SK-N-SH (cell line): ENCODE measurements at regions of chrX and their contacts with region 1.

Region 1: DNA sequence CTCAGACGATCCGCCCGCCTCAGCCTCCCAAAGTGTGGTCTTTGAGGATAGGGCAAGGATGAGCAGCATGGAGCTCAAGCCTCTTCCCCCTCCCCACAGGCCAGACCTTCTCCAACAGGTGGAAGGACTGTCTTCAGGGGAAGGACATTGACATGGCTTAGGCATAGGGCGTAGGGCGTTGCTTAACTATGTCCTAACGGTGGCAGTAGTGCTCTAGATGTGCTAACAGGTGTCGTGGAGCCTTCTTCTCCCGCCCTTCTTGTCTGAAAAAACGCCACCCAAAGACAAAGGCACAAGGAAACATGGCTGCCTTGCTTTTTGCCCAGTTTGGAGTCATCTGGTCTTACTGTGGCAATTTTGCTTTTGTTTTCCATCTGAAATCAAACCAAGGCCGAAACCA is 219.8 kb downstream of the OR13H1 start:
- DNase-seq: peak; percentile 29
- H3K4me3 ChIP-seq: peak overlapping the region; percentile 39 to 43; a peak in 3 of 4 replicates
- H3K27ac ChIP-seq: no peak overlapping the region
- H3K4me1 ChIP-seq: no peaks in the 10 kb centered on the region; a peak in 1 of 4 replicates
- H3K27me3 ChIP-seq: peaks cover 3% of the 10 kb centered on the region; the same call in 1 of the 2 replicates
- CTCF ChIP-seq: peak; percentile 71
- EP300 ChIP-seq: no peak
- RAD21 ChIP-seq: peak; percentile 85

Region 2: DNA sequence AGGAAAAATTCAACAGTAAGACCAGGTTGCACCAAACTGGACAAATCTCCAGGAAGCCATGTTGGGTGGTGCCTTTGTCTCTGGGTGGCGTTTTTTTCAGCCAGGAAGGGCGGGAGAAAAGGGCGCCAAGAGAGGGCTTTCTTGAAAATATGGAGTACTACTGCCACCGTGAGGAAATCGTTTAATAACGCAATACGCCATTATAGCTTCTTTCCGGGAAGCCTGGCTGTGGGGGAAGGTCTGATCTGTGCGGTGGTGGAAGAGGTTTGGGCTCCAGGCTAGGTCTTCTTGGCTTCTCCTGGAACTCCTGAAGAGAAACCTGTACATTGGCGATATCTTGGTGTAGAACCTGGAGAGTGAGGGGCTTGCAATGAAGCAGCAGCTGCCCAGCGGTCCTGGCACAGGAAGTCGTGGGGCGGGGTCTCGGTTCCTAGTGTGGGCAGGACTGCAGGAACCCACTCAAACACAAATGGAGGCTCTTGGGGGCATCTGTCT is 17.2 kb before region 1 on chrX:
- CTCF ChIA-PET with region 1: interaction called, 19 read pairs
- POLR2A ChIA-PET with region 1: interaction called, 3 read pairs
- DNase-seq: peak; percentile 62
- H3K4me3 ChIP-seq: peak overlapping the region; percentile 52 to 67
- H3K27ac ChIP-seq: peak overlapping the region; percentile 50 to 90; a peak in 3 of 4 replicates
- H3K4me1 ChIP-seq: peaks cover 0 to 2% of the 10 kb centered on the region in 2 experiments; a peak in 1 of 4 replicates
- H3K27me3 ChIP-seq: no peaks in the 10 kb centered on the region
- CTCF ChIP-seq: peak; percentile 65
- EP300 ChIP-seq: no peak
- RAD21 ChIP-seq: peak; percentile 81

Region 3: GRCh38 chrX:131783555-131784308 is 20.1 kb after region 1 on chrX:
- CTCF ChIA-PET with region 1: interaction called, 11 read pairs
- POLR2A ChIA-PET with region 1: no interaction called
- DNase-seq: no peak
- H3K4me3 ChIP-seq: peak overlapping the region in 1 of 2 experiments; percentile 24; a peak in 2 of 4 replicates
- H3K27ac ChIP-seq: no peak overlapping the region
- H3K4me1 ChIP-seq: peaks cover 0 to 6% of the 10 kb centered on the region in 2 experiments; a peak in 1 of 4 replicates
- H3K27me3 ChIP-seq: no peaks in the 10 kb centered on the region
- CTCF ChIP-seq: peak; percentile 64
- EP300 ChIP-seq: no peak
- RAD21 ChIP-seq: peak; percentile 87

Region 4: DNA sequence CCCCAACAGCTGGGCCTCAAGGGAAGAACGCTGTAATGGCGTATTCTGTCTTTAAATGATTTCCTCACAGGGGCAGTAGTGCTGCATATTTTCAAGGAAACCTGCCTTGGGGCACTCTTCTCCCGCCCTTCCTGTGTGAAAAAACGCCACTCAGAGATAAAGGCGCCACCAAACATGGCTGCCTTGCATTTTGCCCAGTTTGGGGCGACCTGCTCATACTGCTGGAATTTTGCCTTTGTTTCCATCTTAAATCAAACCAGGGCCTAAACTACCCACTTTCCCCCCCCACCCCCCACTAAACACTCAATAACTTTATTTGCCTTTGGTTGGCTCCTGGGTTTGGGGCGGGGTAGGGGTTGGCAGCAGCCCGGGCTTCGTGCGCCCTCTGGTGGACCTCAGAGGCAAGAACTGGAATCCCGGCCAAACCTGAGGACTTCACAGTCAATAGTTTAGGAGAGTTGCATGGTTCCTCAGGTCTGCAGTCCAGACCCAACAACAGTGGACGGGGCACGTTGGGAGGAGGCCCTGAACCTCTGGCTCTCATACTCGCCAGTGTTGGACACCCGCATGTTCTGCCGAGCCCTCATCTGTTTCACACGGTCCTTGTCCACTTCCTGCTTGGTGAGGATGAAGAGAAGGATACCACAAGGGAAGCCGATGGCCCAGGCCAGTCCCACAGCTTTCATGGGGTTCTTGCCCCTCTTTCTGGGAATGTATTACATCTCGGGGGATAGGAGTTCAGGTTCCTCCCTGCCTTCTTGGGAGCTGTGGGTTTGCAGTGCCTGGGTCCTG is 39.4 kb after region 1 on chrX:
- CTCF ChIA-PET with region 1: interaction called, 12 read pairs
- POLR2A ChIA-PET with region 1: no interaction called
- DNase-seq: peak; percentile 71
- H3K4me3 ChIP-seq: peak overlapping the region; percentile 33 to 56; a peak in 3 of 4 replicates
- H3K27ac ChIP-seq: no peak overlapping the region
- H3K4me1 ChIP-seq: no peaks in the 10 kb centered on the region; a peak in 1 of 4 replicates
- H3K27me3 ChIP-seq: peaks cover 16% of the 10 kb centered on the region; the same call in 1 of the 2 replicates
- CTCF ChIP-seq: peak; percentile 82
- EP300 ChIP-seq: no peak
- RAD21 ChIP-seq: peak; percentile 40

Region 5: GRCh38 chrX:131845201-131845600 is 81.5 kb after region 1 on chrX:
- CTCF ChIA-PET with region 1: no interaction called
- POLR2A ChIA-PET with region 1: no interaction called
- DNase-seq: no peak
- H3K4me3 ChIP-seq: no peak overlapping the region
- H3K27ac ChIP-seq: no peak overlapping the region
- H3K4me1 ChIP-seq: peaks cover 0 to 3% of the 10 kb centered on the region in 2 experiments; a peak in 1 of 4 replicates
- H3K27me3 ChIP-seq: peaks cover 11% of the 10 kb centered on the region; the same call in 1 of the 2 replicates
- CTCF ChIP-seq: no peak
- EP300 ChIP-seq: no peak
- RAD21 ChIP-seq: no peak